Activated CD4-positive, alpha-beta T cell treated with anti-CD3 and anti-CD28 coated beads for 36 hours (primary cell): ENCODE measurements at regions of chr6 and their contacts with region 1.

Region 1: DNA sequence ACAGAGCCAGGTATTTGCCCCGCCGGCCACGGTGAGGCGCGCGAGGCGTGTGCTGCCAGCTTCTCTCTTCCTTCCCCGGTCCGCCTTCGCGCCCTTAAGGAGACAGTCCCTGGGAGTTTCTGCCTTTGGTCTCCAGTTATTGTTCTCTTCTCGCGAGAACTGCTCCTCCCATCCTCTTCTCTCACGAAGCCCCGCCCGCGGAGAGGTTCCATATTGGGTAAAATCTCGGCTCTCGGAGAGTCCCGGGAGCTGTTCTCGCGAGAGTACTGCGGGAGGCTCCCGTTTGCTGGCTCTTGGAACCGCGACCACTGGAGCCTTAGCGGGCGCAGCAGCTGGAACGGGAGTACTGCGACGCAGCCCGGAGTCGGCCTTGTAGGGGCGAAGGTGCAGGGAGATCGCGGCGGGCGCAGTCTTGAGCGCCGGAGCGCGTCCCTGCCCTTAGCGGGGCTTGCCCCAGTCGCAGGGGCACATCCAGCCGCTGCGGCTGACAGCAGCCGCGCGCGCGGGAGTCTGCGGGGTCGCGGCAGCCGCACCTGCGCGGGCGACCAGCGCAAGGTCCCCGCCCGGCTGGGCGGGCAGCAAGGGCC is at the start of gene MAPK14:
- DNase-seq: peak; percentile 99
- ATAC-seq: peak; percentile 92
- H3K4me3 Mint-ChIP-seq: peak within 1 kb of the TSS; percentile 98
- H3K27ac Mint-ChIP-seq: peak within 1 kb of the TSS; percentile 98
- H3K4me1 Mint-ChIP-seq: peaks cover 38% of the 10 kb centered on the region
- H3K27me3 Mint-ChIP-seq: peaks cover 19% of the 10 kb centered on the region
- total RNA-seq, gene MAPK14: 39.1 to 44.0 TPM

Region 2: DNA sequence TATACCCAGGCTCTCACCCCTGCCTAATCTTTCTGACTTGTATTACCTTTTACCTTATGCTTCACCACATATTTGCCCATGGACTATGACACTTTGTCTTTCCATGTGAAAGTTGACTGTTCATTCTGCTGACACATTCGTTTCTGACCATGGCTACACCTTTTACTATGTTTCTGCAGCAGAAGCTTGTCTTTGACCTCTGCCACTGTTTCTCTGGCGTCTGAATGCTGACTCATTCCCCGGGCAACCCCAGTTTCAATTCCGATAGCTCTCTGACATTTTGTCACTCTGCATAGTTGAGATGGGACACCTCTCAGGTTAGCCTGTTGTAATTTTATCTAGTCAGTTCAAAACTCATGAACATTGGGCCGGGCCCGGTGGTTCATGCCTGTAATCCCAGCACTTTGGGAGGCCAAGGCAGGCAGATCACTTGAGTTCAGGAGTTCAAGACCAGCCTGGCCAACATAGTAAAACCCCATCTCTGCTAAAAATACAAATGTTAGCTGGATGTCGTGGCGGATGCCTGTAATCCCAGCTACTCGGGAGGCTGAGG is 53.8 kb before region 1 on chr6:
- CTCF ChIA-PET with region 1: no interaction called
- POLR2A ChIA-PET with region 1: no interaction called
- intact Hi-C with region 1: no loop called
- DNase-seq: peak; percentile 67
- ATAC-seq: peak; percentile 97
- H3K4me3 Mint-ChIP-seq: no peak overlapping the region
- H3K27ac Mint-ChIP-seq: peak overlapping the region; percentile 2
- H3K4me1 Mint-ChIP-seq: peaks cover 10% of the 10 kb centered on the region
- H3K27me3 Mint-ChIP-seq: no peaks in the 10 kb centered on the region

Region 3: GRCh38 chr6:36052097-36052496 is 24.5 kb after region 1 on chr6:
- CTCF ChIA-PET with region 1: interaction called, 26 read pairs
- POLR2A ChIA-PET with region 1: interaction called, 3 read pairs
- intact Hi-C with region 1: no loop called
- DNase-seq: no peak
- ATAC-seq: no peak
- H3K4me3 Mint-ChIP-seq: no peak overlapping the region
- H3K27ac Mint-ChIP-seq: no peak overlapping the region
- H3K4me1 Mint-ChIP-seq: peaks cover 16% of the 10 kb centered on the region
- H3K27me3 Mint-ChIP-seq: no peaks in the 10 kb centered on the region

Region 4: GRCh38 chr6:36104836-36105235 is 77.2 kb after region 1 on chr6:
- CTCF ChIA-PET with region 1: interaction called, 183 read pairs
- POLR2A ChIA-PET with region 1: interaction called, 3 read pairs
- intact Hi-C with region 1: no loop called
- DNase-seq: no peak
- ATAC-seq: no peak
- H3K4me3 Mint-ChIP-seq: no peak overlapping the region
- H3K27ac Mint-ChIP-seq: no peak overlapping the region
- H3K4me1 Mint-ChIP-seq: peaks cover 47% of the 10 kb centered on the region
- H3K27me3 Mint-ChIP-seq: no peaks in the 10 kb centered on the region

Region 5: DNA sequence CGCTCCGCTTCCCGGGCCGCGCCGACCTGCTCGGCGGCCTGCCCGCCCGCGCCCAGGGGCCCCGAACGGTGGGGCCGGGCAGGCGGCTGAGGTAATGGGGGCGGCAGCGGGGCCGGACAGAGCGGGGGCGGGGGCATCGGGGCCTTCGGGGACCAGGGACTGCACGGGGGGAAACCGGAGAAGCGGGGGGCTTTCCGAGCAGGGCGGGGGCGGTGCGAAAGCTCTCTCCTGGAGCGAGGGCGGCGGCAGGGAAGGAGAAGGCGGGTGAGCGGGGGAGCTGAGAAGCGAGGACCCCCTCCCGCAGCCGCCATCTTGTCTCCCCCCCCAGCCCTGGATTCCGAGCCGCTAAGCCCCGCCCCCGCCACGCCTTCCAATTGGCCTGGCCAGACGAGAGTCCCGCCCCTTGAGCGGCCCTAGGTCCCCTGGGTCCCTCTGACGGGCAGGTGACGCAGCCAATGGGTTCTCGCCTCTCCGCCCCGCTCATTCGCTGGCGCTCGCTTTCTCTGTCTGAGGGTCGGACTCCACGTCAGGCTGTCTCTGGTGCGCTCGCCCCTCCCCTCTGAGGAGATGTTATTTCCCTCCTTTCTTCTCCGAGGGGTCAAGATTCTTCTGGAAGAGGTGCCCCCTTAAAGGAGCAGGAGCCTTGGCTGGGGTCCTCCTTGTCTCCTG is 169.4 kb after region 1 on chr6:
- CTCF ChIA-PET with region 1: interaction called, 6 read pairs
- POLR2A ChIA-PET with region 1: no interaction called
- intact Hi-C with region 1: loop called (anchors 1 kb)
- DNase-seq: peak; percentile 100
- ATAC-seq: peak; percentile 96
- H3K4me3 Mint-ChIP-seq: peak overlapping the region; percentile 82
- H3K27ac Mint-ChIP-seq: peak overlapping the region; percentile 90
- H3K4me1 Mint-ChIP-seq: peaks cover 45% of the 10 kb centered on the region
- H3K27me3 Mint-ChIP-seq: no peaks in the 10 kb centered on the region

Region 6: GRCh38 chr6:36423101-36423824 is 395.7 kb after region 1 on chr6:
- CTCF ChIA-PET with region 1: no interaction called
- POLR2A ChIA-PET with region 1: no interaction called
- intact Hi-C with region 1: loop called in 1 of 2 experiments (anchors 2 kb)
- DNase-seq: peak; percentile 99
- ATAC-seq: peak; percentile 97
- H3K4me3 Mint-ChIP-seq: peak overlapping the region; percentile 83
- H3K27ac Mint-ChIP-seq: peak overlapping the region; percentile 92
- H3K4me1 Mint-ChIP-seq: peaks cover 17% of the 10 kb centered on the region
- H3K27me3 Mint-ChIP-seq: no peaks in the 10 kb centered on the region

Region 7: GRCh38 chr6:36594029-36594815 is 566.6 kb after region 1 on chr6 and contains the start of gene SRSF3:
- CTCF ChIA-PET with region 1: no interaction called
- POLR2A ChIA-PET with region 1: no interaction called
- intact Hi-C with region 1: loop called in 1 of 2 experiments (anchors 1 kb)
- DNase-seq: peak; percentile 98
- ATAC-seq: peak; percentile 92
- H3K4me3 Mint-ChIP-seq: peak within 1 kb of the TSS; percentile 88
- H3K27ac Mint-ChIP-seq: peak within 1 kb of the TSS; percentile 99
- H3K4me1 Mint-ChIP-seq: peaks cover 21% of the 10 kb centered on the region
- H3K27me3 Mint-ChIP-seq: no peaks in the 10 kb centered on the region
- total RNA-seq, gene SRSF3: 298 to 464 TPM

Region 8: GRCh38 chr6:36623547-36624459 is 596.2 kb after region 1 on chr6:
- CTCF ChIA-PET with region 1: no interaction called
- POLR2A ChIA-PET with region 1: no interaction called
- intact Hi-C with region 1: no loop called
- DNase-seq: peak; percentile 86
- ATAC-seq: peak; percentile 82
- H3K4me3 Mint-ChIP-seq: no peak overlapping the region
- H3K27ac Mint-ChIP-seq: peak overlapping the region; percentile 45
- H3K4me1 Mint-ChIP-seq: peaks cover 18% of the 10 kb centered on the region
- H3K27me3 Mint-ChIP-seq: no peaks in the 10 kb centered on the region